B cell (primary cell): ENCODE measurements at regions of chr11 and their contacts with region 1.

Region 1: GRCh38 chr11:120682866-120683265 is 171.3 kb downstream of the GRIK4 start:
- DNase-seq: no peak
- ATAC-seq: no peak
- H3K4me3 ChIP-seq: no peak overlapping the region
- H3K4me3 Mint-ChIP-seq: no peak overlapping the region
- H3K27ac ChIP-seq: no peak overlapping the region
- H3K27ac Mint-ChIP-seq: no peak overlapping the region
- H3K4me1 ChIP-seq: no peaks in the 10 kb centered on the region
- H3K4me1 Mint-ChIP-seq: no peaks in the 10 kb centered on the region
- H3K27me3 ChIP-seq: peaks cover 0 to 9% (median 0%) of the 10 kb centered on the region in 4 experiments
- H3K27me3 Mint-ChIP-seq: peaks cover 33% of the 10 kb centered on the region
- CTCF ChIP-seq: no peak

Region 2: GRCh38 chr11:120696597-120697218 is 13.8 kb after region 1 on chr11:
- CTCF ChIA-PET with region 1: interaction called, 31 read pairs
- POLR2A ChIA-PET with region 1: no interaction called
- intact Hi-C with region 1: no loop called
- DNase-seq: no peak
- ATAC-seq: no peak
- H3K4me3 ChIP-seq: no peak overlapping the region
- H3K4me3 Mint-ChIP-seq: no peak overlapping the region
- H3K27ac ChIP-seq: no peak overlapping the region
- H3K27ac Mint-ChIP-seq: no peak overlapping the region
- H3K4me1 ChIP-seq: no peaks in the 10 kb centered on the region
- H3K4me1 Mint-ChIP-seq: peaks cover 2% of the 10 kb centered on the region
- H3K27me3 ChIP-seq: no peaks in the 10 kb centered on the region
- H3K27me3 Mint-ChIP-seq: peaks cover 25% of the 10 kb centered on the region
- CTCF ChIP-seq: no peak

Region 3: DNA sequence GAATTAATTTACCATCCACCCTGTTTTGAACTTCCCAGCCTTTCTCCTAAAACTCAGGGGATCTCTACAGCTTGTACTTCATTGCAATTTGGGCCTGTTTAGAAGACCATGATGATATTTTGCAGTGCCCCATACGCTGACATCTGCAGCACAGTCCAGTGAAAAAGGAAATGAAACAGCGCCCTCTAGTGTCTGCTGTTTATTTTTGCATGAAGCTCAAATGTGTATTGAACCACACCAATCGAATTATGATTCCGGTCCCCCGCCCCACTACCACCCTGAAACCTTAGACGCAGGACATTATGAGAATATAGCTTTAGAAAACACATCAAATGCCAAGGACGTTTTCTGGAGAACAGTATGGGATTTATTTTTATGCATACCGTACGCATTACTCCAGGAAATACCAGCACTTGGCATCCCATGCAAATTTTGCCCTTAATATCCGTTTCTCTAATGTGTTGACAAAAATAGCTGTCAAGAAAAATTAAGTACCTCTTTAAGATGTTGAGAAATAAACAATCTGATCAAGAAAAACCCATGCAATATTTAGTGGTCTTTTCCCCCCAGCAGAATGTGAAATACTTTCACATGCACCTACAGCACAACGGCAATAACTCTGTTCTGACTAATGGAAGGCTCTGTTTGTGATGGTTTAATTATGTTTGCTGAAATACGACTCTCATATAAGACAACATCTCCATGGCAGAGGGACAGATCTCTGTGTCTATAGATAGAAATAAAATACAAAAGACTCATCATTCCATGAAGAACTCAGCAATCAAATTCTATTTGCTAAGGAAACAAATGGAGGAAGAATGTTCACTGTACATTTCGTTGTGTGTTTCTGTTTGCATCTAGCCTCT is 512.1 kb after region 1 on chr11:
- CTCF ChIA-PET with region 1: interaction called, 11 read pairs
- POLR2A ChIA-PET with region 1: no interaction called
- intact Hi-C with region 1: no loop called
- DNase-seq: peak; percentile 77
- ATAC-seq: peak; percentile 63
- H3K4me3 ChIP-seq: no peak overlapping the region
- H3K4me3 Mint-ChIP-seq: no peak overlapping the region
- H3K27ac ChIP-seq: no peak overlapping the region
- H3K27ac Mint-ChIP-seq: no peak overlapping the region
- H3K4me1 ChIP-seq: peaks cover 5% of the 10 kb centered on the region in 2 donors
- H3K4me1 Mint-ChIP-seq: peaks cover 8% of the 10 kb centered on the region
- H3K27me3 ChIP-seq: peaks cover 0 to 28% (median 0%) of the 10 kb centered on the region in 4 experiments
- H3K27me3 Mint-ChIP-seq: peaks cover 35% of the 10 kb centered on the region
- CTCF ChIP-seq: peak; percentile 96